ENCODE measurements at regions of chr7 and their contacts with region 1.

Region 1: DNA sequence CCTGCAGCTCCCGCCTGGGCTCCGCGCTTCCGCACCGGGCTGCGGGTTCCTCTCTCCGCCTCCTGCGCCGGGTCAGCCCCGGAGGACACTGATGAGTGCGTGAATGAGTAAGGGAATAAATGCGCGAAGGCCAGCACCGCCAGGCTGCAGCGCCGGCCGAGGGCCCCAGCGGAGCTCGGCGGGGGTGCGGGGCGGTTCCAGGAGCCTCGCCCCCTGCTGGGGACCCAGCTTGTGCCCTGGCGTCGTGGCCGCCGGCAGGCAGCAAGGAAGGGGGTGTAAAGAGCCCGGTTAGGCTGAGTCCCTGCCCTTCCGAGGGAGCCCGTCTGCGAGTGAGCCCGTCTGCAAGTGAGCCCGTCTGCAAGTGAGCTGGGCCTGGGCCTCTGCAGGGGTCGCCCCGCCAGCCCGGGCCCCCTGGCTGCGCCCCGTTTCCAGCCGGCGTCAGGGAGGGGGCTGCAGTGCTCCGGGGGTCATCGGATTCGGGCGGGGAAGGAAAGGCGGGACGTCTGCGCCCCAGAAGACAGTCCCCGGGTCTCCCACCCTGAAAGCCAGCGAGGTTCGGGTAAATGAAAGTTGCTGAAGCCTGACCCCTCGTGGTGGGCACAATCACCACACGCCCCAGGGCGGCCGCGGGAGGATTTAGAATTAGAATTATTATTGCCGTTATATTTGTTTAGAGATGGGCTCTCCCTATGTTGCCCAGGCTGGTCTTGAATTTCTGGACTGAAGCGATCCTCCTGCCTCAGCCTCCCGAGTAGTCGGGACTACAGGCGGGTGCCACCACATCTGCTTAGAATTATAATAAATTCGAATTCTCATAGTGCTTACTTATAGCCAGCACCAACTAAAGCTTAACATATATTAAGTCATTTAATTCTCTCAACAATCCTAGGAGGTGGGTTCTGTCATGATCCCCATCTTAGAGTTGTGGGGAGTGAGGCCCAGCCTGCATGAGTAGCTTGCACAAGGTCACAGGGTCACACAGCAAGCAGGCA is 8.6 kb upstream of the CRYGN start:
- DNase-seq: peak; percentile 85
- CTCF ChIP-seq: peak; percentile 74

Region 2: GRCh38 chr7:151143261-151144015 is 305.1 kb before region 1 on chr7:
- CTCF ChIA-PET with region 1: no interaction called
- POLR2A ChIA-PET with region 1: no interaction called
- DNase-seq: no peak
- CTCF ChIP-seq: no peak

Region 3: DNA sequence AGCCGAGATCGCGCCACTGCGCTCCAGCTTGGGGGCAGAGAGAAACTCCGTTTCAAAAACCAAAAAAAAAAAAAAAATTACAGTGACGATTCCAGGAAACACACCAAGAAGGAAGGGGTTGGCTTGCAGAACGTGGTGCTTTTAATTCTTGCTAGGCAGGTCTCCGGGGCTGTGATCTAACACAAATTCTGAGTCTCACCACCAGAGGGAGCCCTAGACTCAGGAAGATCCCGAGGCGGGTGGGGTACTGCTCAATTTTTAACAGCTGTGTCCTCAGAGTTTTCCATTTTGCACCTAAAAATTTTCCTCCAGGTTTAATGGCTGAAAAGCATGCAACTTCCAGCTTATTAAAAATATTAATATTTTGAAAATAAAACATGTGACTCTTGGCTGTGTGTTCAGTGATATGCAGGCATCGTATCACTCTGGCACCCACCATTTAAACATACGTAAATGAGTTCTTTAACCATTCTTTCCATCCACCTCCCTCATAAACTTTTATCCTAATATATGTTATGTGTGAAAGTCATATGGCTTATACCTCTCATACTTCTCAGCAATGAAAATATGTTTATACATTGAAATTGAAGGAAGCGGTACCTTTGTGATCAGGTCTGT is 133.4 kb before region 1 on chr7:
- CTCF ChIA-PET with region 1: interaction called, 33 read pairs
- POLR2A ChIA-PET with region 1: no interaction called
- DNase-seq: peak; percentile 82
- CTCF ChIP-seq: peak; percentile 72

Region 4: GRCh38 chr7:151429548-151430331 is 18.8 kb before region 1 on chr7:
- CTCF ChIA-PET with region 1: interaction called, 23 read pairs
- POLR2A ChIA-PET with region 1: no interaction called
- DNase-seq: peak; percentile 60
- CTCF ChIP-seq: no peak

Region 5: GRCh38 chr7:151472644-151473380 is 24.3 kb after region 1 on chr7:
- CTCF ChIA-PET with region 1: interaction called, 12 read pairs
- POLR2A ChIA-PET with region 1: no interaction called
- DNase-seq: no peak
- CTCF ChIP-seq: no peak

Region 6: DNA sequence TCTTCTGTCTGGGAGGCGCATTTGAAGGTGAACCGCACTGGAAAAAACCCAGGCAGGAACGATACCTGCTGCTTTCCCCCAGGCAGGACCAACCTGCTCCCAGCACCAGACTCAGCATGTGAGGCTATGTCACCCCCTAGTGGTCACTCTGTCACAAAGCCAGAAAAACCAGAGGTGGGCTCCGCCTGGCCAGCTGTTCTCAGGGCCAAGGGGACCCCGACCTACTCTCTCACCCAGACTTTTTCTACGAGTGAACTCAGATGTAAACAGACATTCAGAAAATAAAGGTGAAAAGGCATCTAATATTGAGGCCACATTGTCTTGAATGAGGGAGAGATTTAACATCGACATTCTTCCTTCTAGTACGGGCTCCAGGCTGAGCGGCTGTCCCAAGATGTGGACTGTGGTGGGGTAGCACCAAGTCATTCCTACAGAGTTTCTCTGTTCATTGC is 311.1 kb after region 1 on chr7:
- CTCF ChIA-PET with region 1: interaction called, 10 read pairs
- POLR2A ChIA-PET with region 1: no interaction called
- DNase-seq: peak; percentile 79
- CTCF ChIP-seq: peak; percentile 86

Measured in GM10248 (cell line).